ENCODE measurements at regions of chr19 and their contacts with region 1.

Region 1: GRCh38 chr19:2588081-2588777 is 112.3 kb downstream of the GADD45B start:
- DNase-seq: no peak
- H3K4me3 ChIP-seq: no peak overlapping the region
- H3K27ac ChIP-seq: no peak overlapping the region
- H3K4me1 ChIP-seq: peaks cover 3 to 16% (median 7%) of the 10 kb centered on the region in 4 experiments
- H3K27me3 ChIP-seq: peaks cover 0 to 3% (median 0%) of the 10 kb centered on the region in 4 experiments; a peak in 1 of 7 replicates
- CTCF ChIP-seq: no peak
- EP300 ChIP-seq: no peak
- POLR2A ChIP-seq: no peak
- RAD21 ChIP-seq: no peak

Region 2: GRCh38 chr19:2552859-2553258 is 35.4 kb before region 1 on chr19:
- CTCF ChIA-PET with region 1: no interaction called
- POLR2A ChIA-PET with region 1: no interaction called
- DNase-seq: no peak
- H3K4me3 ChIP-seq: no peak overlapping the region
- H3K27ac ChIP-seq: no peak overlapping the region
- H3K4me1 ChIP-seq: peaks cover 0 to 10% (median 0%) of the 10 kb centered on the region in 4 experiments; a peak in 1 of 7 replicates
- H3K27me3 ChIP-seq: no peaks in the 10 kb centered on the region
- CTCF ChIP-seq: no peak
- EP300 ChIP-seq: no peak
- POLR2A ChIP-seq: no peak
- RAD21 ChIP-seq: no peak

Region 3: DNA sequence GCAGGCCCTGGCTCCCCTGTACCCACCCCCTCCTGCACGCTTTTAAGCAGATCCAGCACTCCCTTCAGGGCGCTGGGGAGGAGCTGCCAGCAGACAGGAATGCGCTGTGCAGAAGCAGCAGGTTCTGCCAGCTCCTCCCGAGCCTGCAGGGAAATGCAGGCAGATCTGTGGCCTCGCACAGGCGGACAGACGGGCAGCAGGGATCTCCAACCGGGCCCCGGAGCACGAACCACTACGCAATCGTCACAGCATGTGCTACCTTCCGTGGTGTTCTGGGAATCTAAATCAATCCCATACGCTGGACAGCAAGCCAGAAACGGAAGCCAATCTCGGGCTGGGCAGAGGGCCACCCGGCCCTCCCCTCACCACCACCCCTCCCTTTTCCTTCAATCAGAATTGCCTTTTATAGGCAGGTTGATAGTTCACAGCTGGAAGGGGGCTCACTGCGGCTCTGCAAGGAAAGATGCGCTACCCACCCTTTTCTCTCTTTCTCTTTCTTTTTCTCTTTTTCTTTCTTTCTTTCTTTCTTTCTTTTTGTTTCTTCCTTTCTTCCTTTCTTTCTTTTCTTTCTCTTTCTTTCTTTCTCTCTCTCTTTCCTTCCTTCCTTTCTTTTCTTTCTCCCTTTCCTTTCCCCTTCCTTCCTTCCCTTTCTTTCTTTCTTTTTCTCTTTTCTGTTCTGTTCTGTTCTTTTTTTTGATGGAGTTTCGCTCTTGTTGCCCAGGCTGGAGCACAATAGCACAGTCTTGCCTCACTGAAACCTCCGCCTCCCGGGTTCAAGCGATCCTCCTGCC is 14.4 kb after region 1 on chr19:
- CTCF ChIA-PET with region 1: interaction called, 3 read pairs
- POLR2A ChIA-PET with region 1: interaction called, 31 read pairs
- DNase-seq: peak in 1 of 2 experiments; percentile 80
- H3K4me3 ChIP-seq: peak overlapping the region in 3 of 4 experiments; percentile 10 to 45 (median 27); a peak in 4 of 8 replicates
- H3K27ac ChIP-seq: no peak overlapping the region
- H3K4me1 ChIP-seq: peaks cover 0 to 8% (median 2%) of the 10 kb centered on the region in 4 experiments; a peak in 4 of 7 replicates
- H3K27me3 ChIP-seq: peaks cover 0 to 4% (median 0%) of the 10 kb centered on the region in 4 experiments; a peak in 2 of 7 replicates
- CTCF ChIP-seq: no peak
- EP300 ChIP-seq: no peak
- POLR2A ChIP-seq: peak in 1 of 2 experiments; percentile 52; a peak in 1 of 3 replicates
- RAD21 ChIP-seq: no peak; a peak in 1 of 4 replicates

Region 4: GRCh38 chr19:2627319-2627829 is 39.1 kb after region 1 on chr19:
- CTCF ChIA-PET with region 1: no interaction called
- POLR2A ChIA-PET with region 1: no interaction called
- DNase-seq: no peak
- H3K4me3 ChIP-seq: no peak overlapping the region
- H3K27ac ChIP-seq: no peak overlapping the region
- H3K4me1 ChIP-seq: peaks cover 0 to 4% (median under 1%) of the 10 kb centered on the region in 4 experiments; a peak in 2 of 7 replicates
- H3K27me3 ChIP-seq: no peaks in the 10 kb centered on the region
- CTCF ChIP-seq: no peak
- EP300 ChIP-seq: no peak
- POLR2A ChIP-seq: no peak
- RAD21 ChIP-seq: no peak

Region 5: GRCh38 chr19:2668175-2668763 is 80.0 kb after region 1 on chr19:
- CTCF ChIA-PET with region 1: no interaction called
- POLR2A ChIA-PET with region 1: no interaction called
- DNase-seq: no peak
- H3K4me3 ChIP-seq: no peak overlapping the region
- H3K27ac ChIP-seq: no peak overlapping the region
- H3K4me1 ChIP-seq: peaks cover 0 to 4% (median 0%) of the 10 kb centered on the region in 4 experiments; a peak in 1 of 7 replicates
- H3K27me3 ChIP-seq: no peaks in the 10 kb centered on the region; a peak in 1 of 7 replicates
- CTCF ChIP-seq: no peak
- EP300 ChIP-seq: no peak
- POLR2A ChIP-seq: no peak
- RAD21 ChIP-seq: no peak

Measured in H1 (cell line).